ENCODE measurements at regions of chr5 and their contacts with region 1.

Region 1: GRCh38 chr5:171336521-171337209 is 27.6 kb downstream of the TLX3 start:
- DNase-seq: no peak
- ATAC-seq: peak in 2 of 4 donors; percentile 50 to 69
- H3K4me3 ChIP-seq: peak overlapping the region; percentile 58
- H3K27ac ChIP-seq: no peak overlapping the region
- H3K4me1 ChIP-seq: no peaks in the 10 kb centered on the region
- H3K27me3 ChIP-seq: peaks cover 0 to 75% (median 2%) of the 10 kb centered on the region in 3 donors
- CTCF ChIP-seq: peak; percentile 46

Region 2: GRCh38 chr5:170747851-170748250 is 588.8 kb before region 1 on chr5:
- intact Hi-C with region 1: loop called (anchors 2 to 10 kb)
- DNase-seq: no peak
- ATAC-seq: no peak
- H3K4me3 ChIP-seq: no peak overlapping the region
- H3K27ac ChIP-seq: no peak overlapping the region
- H3K4me1 ChIP-seq: no peaks in the 10 kb centered on the region
- H3K27me3 ChIP-seq: peaks cover 0 to 30% (median 8%) of the 10 kb centered on the region in 3 donors
- CTCF ChIP-seq: peak; percentile 20

Region 3: GRCh38 chr5:171207256-171207847 is 129.3 kb before region 1 on chr5:
- intact Hi-C with region 1: loop called (anchors 5 to 10 kb)
- DNase-seq: no peak
- ATAC-seq: no peak
- H3K4me3 ChIP-seq: no peak overlapping the region
- H3K27ac ChIP-seq: no peak overlapping the region
- H3K4me1 ChIP-seq: no peaks in the 10 kb centered on the region
- H3K27me3 ChIP-seq: no peaks in the 10 kb centered on the region
- CTCF ChIP-seq: peak; percentile 44

Measured in psoas muscle (tissue), 8 donors.